AG04450 (cell line): ENCODE measurements at regions of chr5 and their contacts with region 1.

Region 1: DNA sequence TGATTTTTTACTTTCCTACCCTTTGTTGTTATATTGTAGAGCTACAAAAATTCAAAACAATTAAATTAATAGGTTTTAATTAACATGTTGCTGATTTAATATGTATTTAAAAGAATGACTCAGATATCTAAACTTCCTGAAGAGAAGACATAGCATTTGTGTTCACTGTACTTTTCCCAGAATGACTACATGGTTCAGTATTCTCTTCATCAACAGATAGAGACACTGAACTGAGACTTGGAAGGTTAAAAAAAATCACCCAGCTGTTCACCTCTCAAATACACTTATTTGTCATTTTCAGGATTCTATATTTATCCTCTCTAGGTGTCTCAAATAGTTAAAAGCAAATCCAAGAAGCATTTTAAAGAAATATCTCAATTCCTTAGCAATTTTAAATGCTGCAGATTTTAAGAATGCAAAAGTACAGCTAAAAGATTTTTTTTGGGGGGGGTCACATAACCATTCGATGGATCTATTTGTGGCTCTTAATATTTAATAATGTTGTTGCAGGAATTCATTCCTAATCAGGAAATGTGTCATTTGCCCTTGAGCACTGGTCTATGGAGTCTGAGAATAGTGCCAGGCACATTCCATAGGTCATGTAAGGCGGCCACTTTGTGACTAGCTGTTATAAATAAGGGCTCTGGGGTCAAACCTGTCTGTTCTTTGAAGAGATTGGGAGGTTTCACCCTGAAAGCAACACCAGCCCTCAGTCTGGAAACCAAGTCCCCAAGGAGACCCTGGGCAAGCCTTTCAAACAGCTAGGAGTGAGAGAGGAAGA is 463.1 kb downstream of the NR2F1-AS1 start:
- DNase-seq: peak; percentile 13
- H3K4me3 ChIP-seq: no peak overlapping the region
- H3K27ac ChIP-seq: no peak overlapping the region
- H3K27me3 ChIP-seq: no peaks in the 10 kb centered on the region
- CTCF ChIP-seq: no peak

Region 2: GRCh38 chr5:93034621-93035590 is 83.0 kb before region 1 on chr5:
- CTCF ChIA-PET with region 1: no interaction called
- POLR2A ChIA-PET with region 1: no interaction called
- DNase-seq: no peak
- H3K4me3 ChIP-seq: no peak overlapping the region
- H3K27ac ChIP-seq: no peak overlapping the region
- H3K27me3 ChIP-seq: no peaks in the 10 kb centered on the region
- CTCF ChIP-seq: no peak

Region 3: GRCh38 chr5:93267736-93268135 is 149.8 kb after region 1 on chr5:
- CTCF ChIA-PET with region 1: no interaction called
- POLR2A ChIA-PET with region 1: no interaction called
- DNase-seq: no peak
- H3K4me3 ChIP-seq: no peak overlapping the region
- H3K27ac ChIP-seq: no peak overlapping the region
- H3K27me3 ChIP-seq: no peaks in the 10 kb centered on the region
- CTCF ChIP-seq: no peak

Region 4: GRCh38 chr5:94181895-94182294 is 1064.0 kb after region 1 on chr5:
- CTCF ChIA-PET with region 1: interaction called, 10 read pairs
- POLR2A ChIA-PET with region 1: no interaction called
- DNase-seq: no peak
- H3K4me3 ChIP-seq: no peak overlapping the region
- H3K27ac ChIP-seq: no peak overlapping the region
- H3K27me3 ChIP-seq: no peaks in the 10 kb centered on the region
- CTCF ChIP-seq: peak; percentile 31; the same call in 1 of the 2 replicates